AG04449 (cell line): ENCODE measurements at regions of chr4 and their contacts with region 1.

Region 1: DNA sequence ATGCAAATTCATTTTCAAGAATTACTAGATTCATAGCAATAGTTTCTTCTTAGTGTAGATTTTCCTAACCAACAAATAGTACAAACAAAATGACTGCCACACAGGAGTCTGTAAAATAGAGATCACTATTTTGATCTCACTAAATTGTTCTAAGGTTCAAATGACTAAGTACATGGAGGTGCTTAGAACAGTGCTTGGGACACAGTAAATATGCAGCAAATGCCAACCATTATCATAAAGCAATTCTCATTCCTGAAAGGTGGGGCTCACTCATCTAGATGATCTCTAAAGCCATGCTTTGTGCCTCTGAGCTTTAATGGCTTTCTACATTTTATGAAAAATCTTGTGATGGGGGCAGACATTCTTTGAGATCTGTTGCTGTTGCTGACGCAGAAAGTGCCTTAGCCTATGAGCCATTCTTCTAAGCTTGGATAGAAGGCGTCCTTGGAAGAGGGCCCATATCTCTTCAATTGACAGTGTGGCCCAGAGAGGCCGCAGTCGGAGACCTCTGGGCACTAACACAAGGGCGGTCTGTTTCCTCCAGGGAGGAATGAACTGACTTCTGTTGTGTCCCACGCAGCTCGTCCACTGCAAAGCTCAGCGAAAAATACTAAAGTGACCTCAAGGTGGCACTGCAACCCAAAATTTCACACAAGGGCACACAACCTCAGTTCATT is 23.5 kb downstream of the TLR10 start:
- DNase-seq: no peak
- H3K4me3 ChIP-seq: no peak overlapping the region
- CTCF ChIP-seq: peak; percentile 56

Region 2: GRCh38 chr4:38775326-38775725 is 16.1 kb after region 1 on chr4:
- CTCF ChIA-PET with region 1: interaction called, 125 read pairs
- POLR2A ChIA-PET with region 1: no interaction called
- DNase-seq: no peak
- H3K4me3 ChIP-seq: no peak overlapping the region
- CTCF ChIP-seq: no peak

Region 3: DNA sequence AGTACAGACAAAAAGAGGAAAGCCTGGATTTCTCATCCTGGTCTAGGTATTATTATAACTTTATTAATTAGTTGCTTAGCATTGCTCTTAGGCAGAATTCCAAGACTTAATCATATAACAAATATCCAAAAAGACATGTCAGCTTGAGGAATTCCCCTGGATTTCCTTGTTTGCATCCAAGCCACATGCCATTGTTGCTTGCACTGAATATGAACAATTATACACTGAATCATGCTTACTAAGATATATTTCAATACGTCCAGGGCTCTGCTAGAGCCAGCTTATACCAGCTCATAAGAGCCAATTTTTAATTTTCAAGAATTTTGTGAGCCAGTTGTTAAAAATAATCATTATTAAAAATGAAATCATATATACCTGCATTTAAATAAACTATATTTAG is 29.1 kb after region 1 on chr4:
- CTCF ChIA-PET with region 1: interaction called, 125 read pairs
- POLR2A ChIA-PET with region 1: no interaction called
- DNase-seq: no peak
- H3K4me3 ChIP-seq: no peak overlapping the region
- CTCF ChIP-seq: no peak

Region 4: DNA sequence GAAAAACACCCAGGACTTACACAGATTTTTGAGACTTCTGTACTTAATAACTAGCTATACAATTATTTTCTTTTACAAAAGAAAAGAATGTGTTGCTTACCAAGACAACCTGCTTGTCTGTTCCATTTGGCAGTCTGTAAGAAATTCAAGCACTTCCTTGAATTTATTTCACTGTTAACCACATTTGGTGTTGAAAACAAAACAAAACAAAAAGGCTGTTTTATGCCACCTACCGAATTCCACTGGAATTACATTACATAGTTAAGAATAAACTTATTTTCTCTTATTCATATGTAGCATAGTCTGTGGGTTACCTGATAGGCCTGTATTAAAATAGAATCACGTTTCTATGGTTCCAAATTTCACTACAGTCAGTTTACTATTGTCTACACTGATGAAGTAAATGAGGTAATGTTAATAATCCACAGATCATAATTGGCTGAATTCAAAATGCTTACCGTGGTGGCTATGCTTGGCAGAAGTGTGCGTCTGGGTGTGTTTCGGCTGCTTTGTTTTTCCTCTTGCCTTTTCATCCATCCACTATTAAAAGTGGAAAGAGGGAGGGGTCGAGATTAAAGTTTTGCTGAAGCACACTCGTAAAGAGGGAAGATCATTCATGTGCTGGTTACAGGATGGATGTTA is 45.5 kb after region 1 on chr4 and contains the start of gene TLR1:
- CTCF ChIA-PET with region 1: interaction called, 75 read pairs
- POLR2A ChIA-PET with region 1: no interaction called
- DNase-seq: peak; percentile 40
- H3K4me3 ChIP-seq: no peak within 1 kb of the TSS
- CTCF ChIP-seq: no peak

Region 5: GRCh38 chr4:38868059-38868960 is 109.1 kb after region 1 on chr4:
- CTCF ChIA-PET with region 1: interaction called, 10 read pairs
- POLR2A ChIA-PET with region 1: no interaction called
- DNase-seq: no peak
- H3K4me3 ChIP-seq: peak overlapping the region; percentile 92
- CTCF ChIP-seq: no peak

Region 6: DNA sequence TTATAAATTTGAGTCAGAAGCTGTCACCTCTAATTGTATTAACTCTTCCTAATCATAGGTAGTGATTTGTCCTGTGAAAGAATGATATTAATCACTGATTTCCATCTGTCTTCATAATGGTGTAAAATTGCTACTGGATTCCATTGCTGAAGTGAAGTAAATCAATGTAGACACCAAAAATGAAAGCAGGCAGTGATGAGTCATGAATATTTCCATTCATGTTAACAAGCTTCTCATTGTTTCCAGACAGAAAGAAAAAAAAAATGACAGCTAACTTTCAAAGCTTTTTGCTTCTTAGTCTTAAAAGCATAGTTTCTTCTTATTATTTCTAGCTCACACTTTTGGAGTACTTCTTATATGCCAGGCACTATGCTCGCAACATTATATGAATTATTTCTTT is 129.9 kb after region 1 on chr4:
- CTCF ChIA-PET with region 1: interaction called, 20 read pairs
- POLR2A ChIA-PET with region 1: no interaction called
- DNase-seq: no peak
- H3K4me3 ChIP-seq: no peak overlapping the region
- CTCF ChIP-seq: no peak

Region 7: DNA sequence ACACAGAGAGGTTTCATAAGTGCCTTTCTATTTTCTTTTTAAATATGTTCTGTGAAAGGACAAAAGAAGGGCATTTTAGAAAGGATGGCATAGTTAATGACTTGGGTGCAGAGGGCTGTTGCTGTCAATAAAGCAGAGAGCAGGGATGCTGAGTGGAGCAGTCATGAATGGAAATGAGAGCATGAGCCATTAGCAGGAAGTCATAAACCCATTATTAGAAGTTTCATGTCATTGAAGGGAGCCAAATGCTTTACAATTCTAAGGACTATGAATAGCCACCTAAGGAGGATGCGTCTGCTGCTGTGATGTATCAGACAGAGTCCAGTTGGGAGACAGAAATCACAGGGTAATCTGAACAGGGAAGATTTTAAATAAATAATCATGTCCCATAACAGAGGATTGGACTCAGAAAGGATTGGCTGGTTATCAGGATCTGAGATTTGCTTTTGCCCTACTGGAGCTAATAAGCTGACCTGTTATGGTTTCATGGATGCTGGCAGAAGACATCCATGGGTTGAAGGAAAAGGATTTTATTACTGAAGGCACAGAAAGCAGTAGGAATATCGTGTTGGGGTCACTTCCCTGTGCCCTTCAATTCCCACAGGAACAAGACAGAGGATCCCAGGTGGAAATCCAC is 375.6 kb after region 1 on chr4:
- CTCF ChIA-PET with region 1: interaction called, 35 read pairs
- POLR2A ChIA-PET with region 1: no interaction called
- DNase-seq: no peak
- H3K4me3 ChIP-seq: peak overlapping the region; percentile 23; the same call in 1 of the 2 replicates
- CTCF ChIP-seq: no peak